Activated CD4-positive, alpha-beta memory T cell treated with anti-CD3 and anti-CD28 coated beads, Interleukin-2, amount 10 ng/mL, durations not matched to agents 7 days and 5 days (primary cell): ENCODE measurements at regions of chr12 and their contacts with region 1.

Region 1: GRCh38 chr12:48851883-48852733 is at the start of gene DDX23:
- DNase-seq: peak; percentile 95
- H3K4me3 Mint-ChIP-seq: peak within 1 kb of the TSS; percentile 98
- H3K27ac Mint-ChIP-seq: peak within 1 kb of the TSS; percentile 98
- H3K4me1 Mint-ChIP-seq: peaks cover 36% of the 10 kb centered on the region
- H3K27me3 Mint-ChIP-seq: no peaks in the 10 kb centered on the region
- total RNA-seq, gene DDX23: 117 to 127 TPM

Region 2: DNA sequence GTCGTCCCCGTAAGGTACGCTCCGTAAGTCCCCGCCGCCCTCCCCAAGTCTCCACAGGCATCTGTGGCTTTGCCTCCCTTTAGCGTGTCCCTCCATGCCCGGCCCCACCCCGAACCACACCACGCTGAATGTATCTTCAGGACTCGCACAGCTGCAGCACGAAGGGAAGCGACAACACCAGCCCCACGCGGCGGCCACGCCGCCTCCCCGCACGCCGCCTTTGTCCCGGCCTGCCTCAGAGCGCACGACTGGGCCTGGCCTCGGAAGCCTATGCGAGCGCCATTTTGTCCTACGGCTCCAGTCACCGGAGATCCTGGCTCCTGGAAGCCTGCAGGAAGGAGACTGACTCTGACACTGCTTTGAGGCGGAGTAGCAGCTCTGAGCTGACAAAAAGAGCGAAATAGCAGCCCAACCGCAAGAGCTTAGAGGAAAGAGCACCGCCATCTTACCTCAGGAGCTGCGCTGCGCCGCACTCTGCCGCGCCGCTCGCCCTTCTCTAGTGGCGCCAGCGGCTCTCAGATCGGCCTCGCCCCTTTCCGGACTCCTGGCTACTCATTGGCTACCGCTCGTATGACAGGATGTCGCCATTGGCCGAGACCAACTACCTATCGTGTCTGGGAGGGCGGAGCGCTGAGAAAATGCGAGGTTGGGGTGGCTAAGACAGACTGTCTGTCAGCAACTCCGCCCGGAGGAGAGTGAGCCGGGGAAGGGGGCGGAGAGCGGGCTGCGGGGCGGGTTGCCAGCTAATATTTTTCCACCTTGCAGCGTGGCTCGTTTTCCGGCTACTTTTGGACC is 170.2 kb before region 1 on chr12 and contains the start of gene KANSL2:
- CTCF ChIA-PET with region 1: interaction called, 4 read pairs
- POLR2A ChIA-PET with region 1: interaction called, 13 read pairs
- DNase-seq: peak; percentile 99
- H3K4me3 Mint-ChIP-seq: peak within 1 kb of the TSS; percentile 99
- H3K27ac Mint-ChIP-seq: peak within 1 kb of the TSS; percentile 91
- H3K4me1 Mint-ChIP-seq: peaks cover 44% of the 10 kb centered on the region
- H3K27me3 Mint-ChIP-seq: no peaks in the 10 kb centered on the region
- total RNA-seq, gene KANSL2: 40.3 to 42.2 TPM

Region 3: DNA sequence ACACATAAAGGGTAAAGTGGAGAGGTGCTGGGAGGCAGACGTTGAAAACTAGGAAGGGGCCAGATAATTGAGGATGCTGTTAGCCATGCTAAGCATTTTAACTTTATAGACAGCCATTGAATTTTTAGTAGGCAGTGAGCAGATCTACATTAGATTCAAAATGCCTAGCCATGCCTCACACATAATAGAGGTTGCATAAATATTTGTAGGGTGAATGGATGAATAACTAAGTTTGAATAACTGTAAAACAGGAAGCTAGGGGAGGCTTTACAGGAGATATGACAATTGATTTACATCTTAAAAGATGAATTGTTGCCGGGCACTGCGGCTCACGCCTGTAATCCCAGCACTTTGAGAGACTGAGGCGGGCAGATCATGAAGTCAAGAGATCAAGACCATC is 123.3 kb before region 1 on chr12:
- CTCF ChIA-PET with region 1: no interaction called
- POLR2A ChIA-PET with region 1: no interaction called
- DNase-seq: no peak
- H3K4me3 Mint-ChIP-seq: no peak overlapping the region
- H3K27ac Mint-ChIP-seq: no peak overlapping the region
- H3K4me1 Mint-ChIP-seq: no peaks in the 10 kb centered on the region
- H3K27me3 Mint-ChIP-seq: peaks cover 4% of the 10 kb centered on the region

Region 4: DNA sequence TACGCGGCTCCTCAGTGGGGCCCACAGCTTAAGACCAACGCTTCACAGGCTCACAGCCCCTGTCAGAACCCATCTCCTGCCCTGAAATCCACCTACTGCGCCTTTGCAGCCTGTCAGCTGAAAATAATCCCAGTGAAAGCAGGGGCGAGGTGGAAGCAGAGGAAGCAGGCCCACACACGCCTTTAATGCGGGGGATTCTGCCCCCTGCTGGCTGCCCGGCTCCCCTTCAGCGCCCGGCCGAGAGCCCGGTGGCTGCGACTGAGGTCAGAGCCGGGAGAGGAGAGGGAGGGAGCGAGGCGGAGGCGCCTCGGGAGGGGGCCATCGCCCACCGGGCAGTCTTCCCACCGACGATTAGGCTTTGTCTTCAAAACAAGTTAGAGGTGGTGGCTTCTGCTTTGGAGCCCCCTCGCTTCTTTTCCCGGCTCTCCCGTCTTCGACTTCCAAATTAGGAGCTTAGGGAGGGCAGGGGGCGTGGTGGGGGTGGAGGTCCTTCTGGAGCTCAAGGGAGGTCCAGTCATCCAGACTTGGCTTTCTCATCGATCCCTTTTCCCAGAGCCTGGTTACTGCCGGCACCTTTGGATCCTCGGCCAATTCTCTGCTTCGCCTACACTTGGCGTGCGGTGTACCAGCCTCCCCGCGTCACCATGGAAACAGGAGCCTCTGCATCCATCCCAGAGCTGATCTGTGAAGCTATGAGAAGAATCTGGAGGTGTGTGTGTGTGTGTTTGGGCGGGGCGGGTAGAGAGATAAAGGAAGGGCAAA is 38.7 kb after region 1 on chr12:
- CTCF ChIA-PET with region 1: interaction called, 125 read pairs
- POLR2A ChIA-PET with region 1: interaction called, 31 read pairs
- DNase-seq: peak; percentile 80
- H3K4me3 Mint-ChIP-seq: no peak overlapping the region
- H3K27ac Mint-ChIP-seq: no peak overlapping the region
- H3K4me1 Mint-ChIP-seq: peaks cover 8% of the 10 kb centered on the region
- H3K27me3 Mint-ChIP-seq: peaks cover 16% of the 10 kb centered on the region

Region 5: GRCh38 chr12:48936379-48936979 is 84.4 kb after region 1 on chr12:
- CTCF ChIA-PET with region 1: interaction called, 76 read pairs
- POLR2A ChIA-PET with region 1: interaction called, 33 read pairs
- DNase-seq: peak; percentile 83
- H3K4me3 Mint-ChIP-seq: no peak overlapping the region
- H3K27ac Mint-ChIP-seq: no peak overlapping the region
- H3K4me1 Mint-ChIP-seq: peaks cover 28% of the 10 kb centered on the region
- H3K27me3 Mint-ChIP-seq: no peaks in the 10 kb centered on the region

Region 6: GRCh38 chr12:48988030-48988649 is 136.0 kb after region 1 on chr12:
- CTCF ChIA-PET with region 1: interaction called, 43 read pairs
- POLR2A ChIA-PET with region 1: interaction called, 7 read pairs
- DNase-seq: peak; percentile 79
- H3K4me3 Mint-ChIP-seq: no peak overlapping the region
- H3K27ac Mint-ChIP-seq: no peak overlapping the region
- H3K4me1 Mint-ChIP-seq: peaks cover 4% of the 10 kb centered on the region
- H3K27me3 Mint-ChIP-seq: peaks cover 68% of the 10 kb centered on the region

Region 7: DNA sequence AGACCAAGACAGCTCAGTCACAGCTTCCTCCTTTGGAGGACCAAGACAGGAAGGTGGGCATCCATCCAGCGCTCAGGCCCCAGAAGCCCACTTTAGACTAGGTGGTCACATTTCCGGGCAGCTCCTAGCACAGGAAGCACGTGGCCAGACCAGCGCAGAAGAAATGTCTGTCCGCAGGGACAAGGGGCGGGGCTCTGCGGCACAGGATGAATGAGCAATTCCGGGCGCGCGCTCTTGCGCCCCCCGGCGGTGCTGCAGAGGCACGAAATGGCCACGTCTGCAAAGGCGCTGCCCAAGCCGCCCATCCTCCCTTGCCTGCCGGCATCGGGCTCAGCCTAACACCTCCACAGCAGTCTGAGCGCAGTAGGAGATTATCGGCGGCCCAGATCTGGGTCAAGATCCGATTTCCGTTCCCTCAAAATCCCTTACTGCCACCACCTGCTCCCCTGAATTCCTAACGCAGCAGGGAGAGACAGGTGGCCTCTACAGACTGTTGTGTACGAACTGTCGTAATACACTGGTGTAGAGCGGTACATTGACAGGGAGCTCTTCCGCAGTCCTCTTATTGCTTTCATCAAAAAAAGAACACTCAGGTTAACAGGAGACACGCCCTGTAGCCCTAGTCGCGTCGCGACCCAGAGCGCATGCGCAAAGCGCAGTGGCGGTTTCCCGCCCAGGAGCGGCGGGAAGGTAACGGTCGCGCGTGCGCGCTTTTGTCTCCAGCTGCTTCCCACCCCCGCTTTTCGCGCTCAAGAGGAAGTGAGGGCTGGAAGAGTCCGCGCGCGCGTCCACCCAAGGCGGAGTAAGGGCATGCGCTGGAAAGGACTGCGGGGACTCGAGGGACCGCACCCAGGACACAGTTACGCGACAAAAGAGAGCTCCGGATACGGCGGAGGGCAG is 278.3 kb after region 1 on chr12:
- CTCF ChIA-PET with region 1: no interaction called
- POLR2A ChIA-PET with region 1: interaction called, 22 read pairs
- DNase-seq: peak; percentile 92
- H3K4me3 Mint-ChIP-seq: peak overlapping the region; percentile 96
- H3K27ac Mint-ChIP-seq: peak overlapping the region; percentile 97
- H3K4me1 Mint-ChIP-seq: peaks cover 54% of the 10 kb centered on the region
- H3K27me3 Mint-ChIP-seq: no peaks in the 10 kb centered on the region